Transverse colon (tissue), 4 donors: ENCODE measurements at regions of chr5 and their contacts with region 1.

Region 1: GRCh38 chr5:119411935-119412602 is 40.2 kb upstream of the HSD17B4 start:
- DNase-seq: peak; percentile 63
- H3K4me3 ChIP-seq: peak overlapping the region; percentile 23 to 56 (median 38)
- H3K27ac ChIP-seq: peak overlapping the region; percentile 60 to 73 (median 70)
- H3K4me1 ChIP-seq: peaks cover 7 to 16% (median 11%) of the 10 kb centered on the region in 4 donors
- H3K27me3 ChIP-seq: no peaks in the 10 kb centered on the region
- CTCF ChIP-seq: peak; percentile 92 to 96 (median 95)
- EP300 ChIP-seq: no peak
- POLR2A ChIP-seq: no peak

Region 2: GRCh38 chr5:118987988-118988865 is 423.8 kb before region 1 on chr5 and contains the start of gene DTWD2:
- in situ Hi-C with region 1: loop called in 2 of 4 experiments (anchors 10 to 25 kb)
- intact Hi-C with region 1: loop called (anchors 5 kb)
- DNase-seq: peak; percentile 96
- H3K4me3 ChIP-seq: peak within 1 kb of the TSS; percentile 51 to 86 (median 74)
- H3K27ac ChIP-seq: peak within 1 kb of the TSS; percentile 90 to 97 (median 92)
- H3K4me1 ChIP-seq: peaks cover 0 to 17% (median 8%) of the 10 kb centered on the region in 4 donors
- H3K27me3 ChIP-seq: no peaks in the 10 kb centered on the region
- CTCF ChIP-seq: peak; percentile 84 to 97 (median 86)
- EP300 ChIP-seq: no peak
- POLR2A ChIP-seq: peak; percentile 62
- total RNA-seq, gene DTWD2: 13.1 to 34.0 (median 23.0) TPM

Region 3: GRCh38 chr5:119022017-119022745 is 389.9 kb before region 1 on chr5:
- in situ Hi-C with region 1: loop called in 2 of 4 experiments (anchors 25 kb)
- intact Hi-C with region 1: no loop called
- DNase-seq: no peak
- H3K4me3 ChIP-seq: no peak overlapping the region
- H3K27ac ChIP-seq: peak overlapping the region in 1 of 4 donors; percentile 37
- H3K4me1 ChIP-seq: peaks cover 0 to 15% (median 0%) of the 10 kb centered on the region in 4 donors
- H3K27me3 ChIP-seq: no peaks in the 10 kb centered on the region
- CTCF ChIP-seq: peak; percentile 28 to 38 (median 36)
- EP300 ChIP-seq: no peak
- POLR2A ChIP-seq: no peak

Region 4: DNA sequence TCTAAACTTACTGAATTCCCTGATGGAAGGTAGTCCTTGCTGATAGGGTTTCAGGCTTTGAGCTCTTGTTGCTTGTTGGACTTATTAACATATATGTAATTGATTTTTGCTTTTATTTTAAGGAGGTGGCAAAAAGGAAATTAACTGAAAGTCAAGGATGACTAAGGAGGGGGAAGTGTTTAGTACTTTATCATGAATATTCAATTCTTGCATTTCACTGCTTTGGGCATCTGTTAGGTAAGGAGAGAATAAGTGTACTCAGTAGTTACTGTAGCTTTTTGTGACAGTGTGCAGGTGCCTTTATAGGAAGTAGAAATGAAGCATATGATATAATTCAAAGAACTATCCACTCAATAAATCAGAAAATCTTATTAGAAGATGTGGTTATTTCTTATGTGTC is 294.1 kb before region 1 on chr5:
- in situ Hi-C with region 1: no loop called
- intact Hi-C with region 1: no loop called
- DNase-seq: no peak
- H3K4me3 ChIP-seq: no peak overlapping the region
- H3K27ac ChIP-seq: no peak overlapping the region
- H3K4me1 ChIP-seq: no peaks in the 10 kb centered on the region
- H3K27me3 ChIP-seq: no peaks in the 10 kb centered on the region
- CTCF ChIP-seq: no peak
- EP300 ChIP-seq: no peak
- POLR2A ChIP-seq: no peak

Region 5: DNA sequence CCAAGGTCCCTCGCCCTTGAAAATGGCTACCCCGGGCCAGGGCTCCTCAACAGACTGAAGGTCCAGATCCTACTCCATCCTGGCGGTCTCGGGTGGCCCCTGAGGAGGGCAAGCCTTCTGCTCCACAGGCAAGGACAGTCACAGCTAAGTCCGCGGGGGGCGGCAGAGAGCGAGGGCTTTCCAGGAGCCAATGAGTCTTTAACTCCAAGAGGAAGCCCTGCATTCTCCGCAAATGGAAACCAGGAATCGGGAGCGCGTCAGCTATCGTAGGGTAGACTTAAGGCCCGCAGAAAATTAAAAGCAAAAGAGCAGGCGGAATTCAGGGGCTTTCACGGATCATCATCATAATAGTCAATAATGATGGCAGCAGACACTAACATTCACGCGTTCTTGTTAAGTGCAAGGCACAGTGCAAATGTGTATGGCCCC is 144.1 kb before region 1 on chr5:
- in situ Hi-C with region 1: loop called in 2 of 4 experiments (anchors 25 kb)
- intact Hi-C with region 1: loop called (anchors 10 kb)
- DNase-seq: peak; percentile 92
- H3K4me3 ChIP-seq: peak overlapping the region; percentile 56 to 85 (median 72)
- H3K27ac ChIP-seq: peak overlapping the region; percentile 96 to 98 (median 97)
- H3K4me1 ChIP-seq: peaks cover 0 to 21% (median 10%) of the 10 kb centered on the region in 4 donors
- H3K27me3 ChIP-seq: no peaks in the 10 kb centered on the region
- CTCF ChIP-seq: peak; percentile 26 to 72 (median 43)
- EP300 ChIP-seq: no peak
- POLR2A ChIP-seq: no peak

Region 6: DNA sequence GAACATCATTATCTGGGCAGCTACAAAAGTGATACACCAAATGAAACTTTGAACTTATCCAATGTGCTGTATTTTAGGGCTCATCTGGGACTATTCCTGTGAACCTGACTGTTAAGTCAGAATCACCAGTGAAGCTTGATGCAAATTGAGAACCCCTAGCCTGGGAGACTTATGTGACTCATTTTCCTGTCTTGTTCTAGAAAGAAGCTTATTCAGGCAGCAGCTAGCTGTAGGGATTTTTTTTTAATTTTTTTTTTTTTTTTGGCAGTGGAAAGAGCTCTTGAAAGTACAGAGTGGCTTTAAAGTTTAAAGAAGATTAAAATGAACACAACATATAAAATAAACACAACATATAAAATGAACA is 137.3 kb before region 1 on chr5:
- in situ Hi-C with region 1: loop called in 2 of 4 experiments (anchors 25 kb)
- intact Hi-C with region 1: loop called (anchors 10 kb)
- DNase-seq: no peak
- H3K4me3 ChIP-seq: no peak overlapping the region
- H3K27ac ChIP-seq: peak overlapping the region; percentile 49 to 75 (median 61)
- H3K4me1 ChIP-seq: peaks cover 4 to 33% (median 23%) of the 10 kb centered on the region in 4 donors
- H3K27me3 ChIP-seq: no peaks in the 10 kb centered on the region
- CTCF ChIP-seq: no peak
- EP300 ChIP-seq: no peak
- POLR2A ChIP-seq: no peak

Region 7: GRCh38 chr5:119367502-119368237 is 44.4 kb before region 1 on chr5:
- in situ Hi-C with region 1: no loop called
- intact Hi-C with region 1: no loop called
- DNase-seq: no peak
- H3K4me3 ChIP-seq: no peak overlapping the region
- H3K27ac ChIP-seq: no peak overlapping the region
- H3K4me1 ChIP-seq: peaks cover 0 to 33% (median 9%) of the 10 kb centered on the region in 4 donors
- H3K27me3 ChIP-seq: no peaks in the 10 kb centered on the region
- CTCF ChIP-seq: no peak
- EP300 ChIP-seq: no peak
- POLR2A ChIP-seq: no peak

Region 8: DNA sequence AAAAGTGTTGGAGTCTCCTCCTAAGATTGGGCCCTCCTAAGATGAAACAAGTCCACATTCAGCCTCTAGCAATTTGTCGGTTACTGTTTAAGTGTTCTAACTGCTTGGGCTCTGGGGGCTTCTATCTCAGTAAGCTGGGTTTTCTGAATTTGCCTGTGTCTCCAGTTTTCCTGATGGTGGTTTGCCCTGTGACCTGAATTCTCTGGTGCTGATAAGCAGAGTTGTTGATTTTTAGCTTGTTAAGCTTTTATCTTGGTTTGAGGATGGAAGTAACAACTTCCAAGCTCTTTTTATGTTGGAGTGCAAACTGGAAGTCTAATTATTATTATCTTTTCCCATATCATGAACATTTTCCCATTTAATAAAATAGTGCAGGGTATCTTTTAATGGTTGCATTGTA is 71.1 kb after region 1 on chr5:
- in situ Hi-C with region 1: no loop called
- intact Hi-C with region 1: no loop called
- DNase-seq: no peak
- H3K4me3 ChIP-seq: no peak overlapping the region
- H3K27ac ChIP-seq: no peak overlapping the region
- H3K4me1 ChIP-seq: peaks cover 0 to 4% (median 0%) of the 10 kb centered on the region in 4 donors
- H3K27me3 ChIP-seq: no peaks in the 10 kb centered on the region
- CTCF ChIP-seq: no peak
- EP300 ChIP-seq: no peak
- POLR2A ChIP-seq: no peak

Region 9: DNA sequence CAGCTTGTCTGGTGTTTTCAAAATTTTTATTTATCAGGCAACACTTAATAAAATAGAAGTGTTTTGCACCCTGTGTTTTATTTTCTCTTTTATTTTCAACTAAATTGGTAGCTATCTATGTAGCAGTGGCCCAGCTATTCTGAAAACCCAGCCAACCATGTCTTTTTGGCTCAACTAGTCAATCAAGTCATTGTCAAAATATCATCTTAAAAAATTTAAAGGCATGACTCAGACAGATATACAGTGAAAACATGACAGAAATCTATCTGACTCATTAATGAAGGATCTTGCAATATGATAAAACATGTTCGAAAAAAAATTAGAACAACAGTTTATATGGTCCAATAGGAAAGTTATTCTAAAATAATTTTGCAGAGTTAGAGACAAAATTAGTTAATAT is 115.3 kb after region 1 on chr5:
- in situ Hi-C with region 1: no loop called
- intact Hi-C with region 1: no loop called
- DNase-seq: no peak
- H3K4me3 ChIP-seq: no peak overlapping the region
- H3K27ac ChIP-seq: no peak overlapping the region
- H3K4me1 ChIP-seq: no peaks in the 10 kb centered on the region
- H3K27me3 ChIP-seq: no peaks in the 10 kb centered on the region
- CTCF ChIP-seq: no peak
- EP300 ChIP-seq: no peak
- POLR2A ChIP-seq: no peak